Prostate gland (tissue), 2 donors: ENCODE measurements at regions of chrX and their contacts with region 1.

Region 1: GRCh38 chrX:150365051-150365989 is 2.2 kb downstream of the MAMLD1 start:
- DNase-seq: peak; percentile 28
- H3K4me3 ChIP-seq: peak overlapping the region; percentile 41 to 45
- H3K27ac ChIP-seq: peak overlapping the region; percentile 75 to 79
- H3K4me1 ChIP-seq: no peaks in the 10 kb centered on the region
- H3K27me3 ChIP-seq: no peaks in the 10 kb centered on the region
- CTCF ChIP-seq: peak; percentile 16 to 66 (median 50)
- POLR2A ChIP-seq: no peak

Region 2: DNA sequence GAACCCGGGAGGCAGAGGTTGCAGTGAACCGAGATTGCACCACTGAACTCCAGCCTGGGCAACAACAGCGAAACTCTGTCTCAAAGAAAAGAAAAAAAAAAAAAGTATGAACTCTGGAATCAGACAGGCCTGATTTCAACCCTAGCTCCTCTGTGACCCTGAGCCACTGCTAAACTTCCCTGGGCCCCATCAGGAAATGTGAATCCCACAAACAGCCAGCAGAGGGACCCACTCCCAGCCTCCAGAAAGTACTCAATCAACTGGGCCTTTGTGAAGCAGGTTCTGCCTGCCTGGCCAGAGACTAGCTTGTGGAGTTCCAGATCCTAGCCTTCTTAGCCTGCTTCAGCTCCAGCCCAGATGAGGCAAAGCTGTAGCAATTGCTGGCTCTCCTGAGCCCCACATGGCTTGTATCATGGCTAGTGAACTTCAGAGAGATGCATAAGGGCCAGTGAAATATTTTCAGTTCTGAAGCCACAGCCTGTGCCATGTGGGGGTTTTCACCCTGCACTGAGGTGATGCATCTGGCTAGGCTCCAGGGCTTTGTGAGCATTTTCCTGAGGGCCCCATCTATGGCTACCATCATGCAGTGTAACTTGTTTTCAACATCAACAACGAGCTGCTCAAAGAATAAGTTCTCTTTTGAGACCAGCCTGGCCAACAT is 853.0 kb before region 1 on chrX:
- intact Hi-C with region 1: no loop called
- DNase-seq: peak; percentile 37
- H3K4me3 ChIP-seq: no peak overlapping the region
- H3K27ac ChIP-seq: no peak overlapping the region
- H3K4me1 ChIP-seq: no peaks in the 10 kb centered on the region
- H3K27me3 ChIP-seq: no peaks in the 10 kb centered on the region
- CTCF ChIP-seq: peak in 3 of 4 experiments; percentile 26 to 63 (median 33)
- POLR2A ChIP-seq: no peak

Region 3: GRCh38 chrX:149962859-149963757 is 402.2 kb before region 1 on chrX:
- intact Hi-C with region 1: loop called (anchors 5 kb)
- DNase-seq: peak; percentile 28
- H3K4me3 ChIP-seq: no peak overlapping the region
- H3K27ac ChIP-seq: no peak overlapping the region
- H3K4me1 ChIP-seq: no peaks in the 10 kb centered on the region
- H3K27me3 ChIP-seq: no peaks in the 10 kb centered on the region
- CTCF ChIP-seq: peak in 3 of 4 experiments; percentile 51 to 63 (median 57)
- POLR2A ChIP-seq: no peak

Region 4: DNA sequence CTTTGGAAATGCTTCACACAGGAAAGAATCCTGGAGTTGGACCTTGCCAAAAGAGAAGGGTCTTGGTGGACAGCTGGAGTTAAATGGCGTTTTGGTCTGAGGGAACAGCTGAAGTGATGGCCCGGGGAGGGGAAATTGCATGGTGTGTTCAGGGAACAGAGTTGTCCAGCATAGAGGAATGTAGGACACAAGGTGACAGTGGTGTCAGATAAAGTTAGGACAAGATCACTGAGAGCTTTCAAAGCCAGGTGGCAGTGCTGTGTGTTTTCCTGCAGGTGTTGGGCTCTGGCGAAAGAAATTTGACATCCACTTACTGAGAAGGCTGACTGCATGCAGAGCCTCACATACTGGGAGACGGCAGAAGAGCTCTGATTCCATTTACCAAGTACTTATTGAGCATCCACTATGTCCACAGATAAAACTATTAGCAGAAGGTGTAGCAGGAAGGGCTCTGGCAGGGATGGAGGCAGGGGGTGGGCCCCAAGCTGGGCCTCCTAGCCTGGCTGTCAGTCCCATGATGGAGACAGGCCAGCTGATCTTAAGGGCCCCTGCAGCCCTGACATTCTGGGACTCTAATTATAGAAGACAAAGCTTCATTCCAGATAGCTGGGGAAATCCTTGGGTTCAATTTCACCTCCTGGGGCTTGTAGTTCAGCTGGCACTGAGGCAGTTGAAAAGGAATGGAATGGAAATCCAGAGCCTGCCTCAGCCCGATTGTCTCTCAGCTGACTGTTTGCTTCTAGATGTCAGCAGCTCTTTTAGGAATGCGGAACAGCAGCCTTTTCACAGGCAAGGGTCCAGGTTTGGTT is 152.4 kb before region 1 on chrX:
- intact Hi-C with region 1: loop called (anchors 5 kb)
- DNase-seq: peak; percentile 30
- H3K4me3 ChIP-seq: no peak overlapping the region
- H3K27ac ChIP-seq: peak overlapping the region in 1 of 2 donors; percentile 45
- H3K4me1 ChIP-seq: no peaks in the 10 kb centered on the region
- H3K27me3 ChIP-seq: no peaks in the 10 kb centered on the region
- CTCF ChIP-seq: no peak
- POLR2A ChIP-seq: no peak

Region 5: DNA sequence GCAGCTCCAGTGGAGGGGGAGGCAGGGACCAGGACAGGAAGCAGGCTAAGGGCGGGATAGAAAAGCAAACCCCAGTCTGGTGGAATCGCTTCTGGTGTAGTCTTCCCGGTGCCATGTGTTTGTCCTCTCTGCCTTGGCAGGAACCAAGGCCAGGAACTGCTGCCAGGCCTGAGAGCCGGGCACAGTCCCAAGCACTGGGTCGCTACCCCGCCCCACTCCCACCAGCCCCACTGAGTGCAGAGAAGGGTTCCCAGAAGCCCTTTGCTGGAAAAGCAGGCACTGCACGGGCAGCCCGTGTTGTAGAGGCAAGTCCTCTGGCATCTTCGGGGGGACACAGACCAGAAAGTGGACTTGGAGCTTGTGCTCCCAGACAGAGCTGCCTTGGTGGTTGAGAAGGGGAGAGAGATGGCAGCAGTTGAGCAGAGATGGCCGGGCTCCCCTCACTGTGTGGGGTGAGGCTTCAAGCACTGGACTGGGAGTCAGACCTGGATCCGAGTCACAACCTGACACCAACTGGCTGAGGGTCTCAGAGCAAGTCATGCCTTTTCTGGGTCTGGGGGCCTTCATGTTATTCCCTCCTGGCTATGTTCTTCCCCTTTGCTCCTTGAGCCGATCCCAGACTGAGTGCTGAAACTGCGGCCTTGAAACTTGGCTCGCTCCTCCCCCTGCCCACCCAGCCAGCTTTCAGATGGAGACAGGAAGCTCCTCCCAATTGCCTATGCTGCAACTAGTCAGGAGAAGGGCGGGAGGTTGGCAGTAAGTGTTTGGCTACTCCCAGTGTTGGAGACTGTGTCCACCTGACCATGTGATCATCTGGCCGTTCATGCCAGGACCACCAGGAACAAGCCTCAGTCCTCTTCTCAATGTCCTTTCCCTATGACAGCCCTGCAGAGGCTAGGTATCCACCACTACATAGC is 143.4 kb after region 1 on chrX:
- intact Hi-C with region 1: loop called (anchors 5 kb)
- DNase-seq: peak; percentile 17
- H3K4me3 ChIP-seq: no peak overlapping the region
- H3K27ac ChIP-seq: peak overlapping the region; percentile 50 to 57
- H3K4me1 ChIP-seq: no peaks in the 10 kb centered on the region
- H3K27me3 ChIP-seq: no peaks in the 10 kb centered on the region
- CTCF ChIP-seq: no peak
- POLR2A ChIP-seq: no peak

Region 6: GRCh38 chrX:150522494-150522893 is 157.2 kb after region 1 on chrX:
- intact Hi-C with region 1: no loop called
- DNase-seq: no peak
- H3K4me3 ChIP-seq: no peak overlapping the region
- H3K27ac ChIP-seq: no peak overlapping the region
- H3K4me1 ChIP-seq: no peaks in the 10 kb centered on the region
- H3K27me3 ChIP-seq: no peaks in the 10 kb centered on the region
- CTCF ChIP-seq: no peak
- POLR2A ChIP-seq: no peak

Region 7: DNA sequence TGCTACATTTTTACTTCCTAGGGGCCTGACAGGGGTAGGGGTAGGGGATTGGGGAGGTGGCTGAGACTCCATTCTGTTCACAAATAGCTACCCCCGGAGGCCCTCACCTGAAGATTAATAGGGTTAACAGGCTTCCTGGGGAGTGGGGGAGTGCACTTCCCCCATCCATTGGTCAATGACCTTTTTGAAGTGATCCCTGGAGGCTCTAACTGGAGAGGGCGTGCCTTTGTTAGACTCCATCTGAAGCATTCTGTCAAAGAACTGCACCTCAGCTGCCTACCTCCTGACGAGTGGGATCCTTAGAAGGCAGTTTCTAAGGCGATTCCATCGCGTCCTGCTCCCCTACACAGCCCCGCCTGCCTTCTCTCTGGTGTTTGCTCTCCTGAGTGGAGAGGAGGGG is 193.1 kb after region 1 on chrX:
- intact Hi-C with region 1: no loop called
- DNase-seq: no peak
- H3K4me3 ChIP-seq: no peak overlapping the region
- H3K27ac ChIP-seq: no peak overlapping the region
- H3K4me1 ChIP-seq: no peaks in the 10 kb centered on the region
- H3K27me3 ChIP-seq: no peaks in the 10 kb centered on the region
- CTCF ChIP-seq: no peak
- POLR2A ChIP-seq: no peak

Region 8: DNA sequence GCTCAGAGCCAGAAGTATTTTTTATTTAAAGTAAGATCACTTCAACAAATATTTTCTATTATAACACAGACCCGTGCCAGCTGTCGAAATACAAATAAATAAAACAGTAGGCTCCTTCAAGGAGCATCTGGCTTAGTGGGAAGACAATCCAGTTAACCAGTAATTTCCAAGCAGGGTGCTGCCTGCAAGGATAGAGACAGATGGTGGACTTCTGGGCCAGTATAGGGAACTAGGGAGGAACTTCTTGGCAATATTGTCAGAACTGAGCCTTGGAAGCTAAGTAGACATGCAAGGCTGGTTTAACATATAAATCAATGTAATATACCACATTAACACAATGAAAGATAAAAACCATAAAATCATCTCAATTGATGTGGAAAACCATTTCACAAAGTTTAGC is 310.9 kb after region 1 on chrX:
- intact Hi-C with region 1: loop called (anchors 10 kb)
- DNase-seq: no peak
- H3K4me3 ChIP-seq: no peak overlapping the region
- H3K27ac ChIP-seq: no peak overlapping the region
- H3K4me1 ChIP-seq: no peaks in the 10 kb centered on the region
- H3K27me3 ChIP-seq: no peaks in the 10 kb centered on the region
- CTCF ChIP-seq: no peak
- POLR2A ChIP-seq: no peak